Activated CD8-positive, alpha-beta memory T cell treated with anti-CD3 and anti-CD28 coated beads, Interleukin-2, amount 10 ng/mL, durations not matched to agents 7 days and 5 days (primary cell): ENCODE measurements at regions of chr11 and their contacts with region 1.

Region 1: GRCh38 chr11:57800444-57801182 is 39.0 kb downstream of the CTNND1 start:
- DNase-seq: no peak
- ATAC-seq: peak; percentile 93
- H3K4me3 Mint-ChIP-seq: no peak overlapping the region
- H3K27ac Mint-ChIP-seq: peak overlapping the region; percentile 75
- H3K4me1 Mint-ChIP-seq: peaks cover 27% of the 10 kb centered on the region
- H3K27me3 Mint-ChIP-seq: no peaks in the 10 kb centered on the region

Region 2: DNA sequence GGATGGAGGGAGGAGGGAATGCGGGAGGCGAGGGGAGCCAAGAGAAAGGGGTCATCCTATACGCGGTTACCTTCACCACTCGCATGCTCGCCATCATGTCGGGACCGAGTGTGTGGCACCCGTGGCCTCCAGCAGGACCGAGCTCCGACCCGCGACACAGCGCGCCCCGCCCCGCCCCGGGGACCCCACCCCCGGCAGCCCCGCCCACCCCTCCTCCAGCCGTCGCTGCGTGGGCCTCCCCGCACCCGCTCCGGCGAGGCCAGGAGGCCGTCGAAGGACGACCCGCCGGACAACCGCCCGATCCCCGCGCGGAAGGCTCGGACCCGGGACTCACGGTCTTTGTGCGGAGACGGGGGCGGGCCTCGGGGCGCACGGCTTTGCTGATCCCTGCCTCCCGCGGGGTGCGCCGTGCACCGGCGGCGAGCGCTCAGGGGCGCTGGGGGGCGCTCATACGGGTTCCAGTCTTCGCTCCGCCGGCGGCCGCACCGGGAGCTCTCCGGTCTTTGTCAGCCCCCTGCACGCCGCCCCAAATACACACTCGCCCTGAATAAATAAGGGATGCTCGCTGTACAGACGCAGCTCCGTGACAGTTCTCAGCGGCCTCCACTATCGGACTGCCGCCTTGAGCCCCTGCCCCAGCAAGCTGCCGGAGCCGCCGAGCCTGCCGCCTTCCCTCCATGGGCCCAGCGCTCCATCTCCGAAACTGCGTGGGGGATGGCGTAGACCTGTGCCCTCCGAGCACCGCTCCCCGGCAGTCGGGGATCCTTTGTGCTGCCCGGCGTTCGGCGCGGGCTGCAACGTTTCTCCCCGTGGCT is 232.9 kb before region 1 on chr11 and contains the start of gene UBE2L6:
- CTCF ChIA-PET with region 1: interaction called, 39 read pairs
- DNase-seq: peak; percentile 77
- ATAC-seq: peak; percentile 79
- H3K4me3 Mint-ChIP-seq: peak within 1 kb of the TSS; percentile 100
- H3K27ac Mint-ChIP-seq: peak within 1 kb of the TSS; percentile 98
- H3K4me1 Mint-ChIP-seq: peaks cover 30% of the 10 kb centered on the region
- H3K27me3 Mint-ChIP-seq: no peaks in the 10 kb centered on the region
- total RNA-seq, gene UBE2L6: 245 to 317 TPM

Region 3: DNA sequence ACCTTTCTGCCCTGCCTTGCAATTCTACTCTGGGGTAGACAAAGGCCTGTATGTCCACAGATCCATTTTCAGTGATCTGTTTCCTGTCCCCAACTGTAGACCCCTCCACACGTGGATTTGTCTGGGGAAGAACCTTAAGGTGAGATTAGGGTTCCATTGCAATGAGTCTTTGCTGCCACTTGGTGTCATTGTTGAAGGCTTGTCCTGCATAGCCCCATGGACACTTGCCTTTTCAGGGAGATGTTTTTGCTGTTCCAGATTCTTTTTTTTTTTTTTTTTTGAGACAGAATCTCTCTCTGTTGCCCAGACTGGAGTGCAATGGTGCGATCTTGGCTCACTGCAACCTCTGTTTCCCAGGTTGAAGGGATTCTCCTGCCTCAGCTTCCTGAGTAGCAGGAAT is 181.3 kb before region 1 on chr11:
- CTCF ChIA-PET with region 1: no interaction called
- DNase-seq: no peak
- ATAC-seq: no peak
- H3K4me3 Mint-ChIP-seq: no peak overlapping the region
- H3K27ac Mint-ChIP-seq: no peak overlapping the region
- H3K4me1 Mint-ChIP-seq: no peaks in the 10 kb centered on the region
- H3K27me3 Mint-ChIP-seq: peaks cover 15% of the 10 kb centered on the region

Region 4: DNA sequence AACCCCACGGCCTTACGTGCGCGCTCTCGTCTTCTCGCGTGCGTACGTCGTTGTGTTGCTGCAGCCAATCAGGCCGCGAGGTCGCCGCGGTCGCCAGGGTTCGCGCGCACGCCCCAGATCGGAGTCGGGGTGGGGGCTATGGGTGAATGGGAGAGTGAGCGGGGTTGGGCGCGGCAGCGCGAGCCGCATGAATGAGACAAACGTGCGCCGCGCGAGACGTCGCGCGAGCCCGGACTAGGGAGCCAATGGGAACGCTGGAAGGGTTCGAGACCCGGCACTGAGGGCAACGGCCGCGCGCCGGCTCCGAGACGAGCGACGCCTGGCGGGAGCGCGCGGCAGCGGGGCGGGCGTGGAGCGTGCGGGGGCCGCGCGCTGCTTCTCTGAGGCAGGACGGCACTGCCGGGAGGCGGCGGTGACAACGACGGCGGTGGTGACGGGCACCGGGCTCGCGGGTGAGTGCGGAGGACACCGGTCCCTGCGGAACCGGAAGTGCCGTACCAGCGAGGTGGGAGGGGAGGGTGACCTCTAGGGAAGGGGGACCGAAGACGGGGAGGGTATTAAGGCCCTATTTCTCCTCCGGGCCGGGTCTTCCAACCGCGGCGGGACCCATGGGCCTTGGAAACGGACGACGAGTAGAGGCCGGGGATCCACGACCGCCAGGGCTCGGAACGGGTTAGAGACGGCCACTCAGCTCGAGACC is 132.7 kb before region 1 on chr11 and contains the start of gene ZDHHC5:
- CTCF ChIA-PET with region 1: interaction called, 18 read pairs
- DNase-seq: peak; percentile 100
- ATAC-seq: peak; percentile 89
- H3K4me3 Mint-ChIP-seq: peak within 1 kb of the TSS; percentile 95
- H3K27ac Mint-ChIP-seq: peak within 1 kb of the TSS; percentile 97
- H3K4me1 Mint-ChIP-seq: peaks cover 47% of the 10 kb centered on the region
- H3K27me3 Mint-ChIP-seq: no peaks in the 10 kb centered on the region
- total RNA-seq, gene ZDHHC5: 74.5 to 75.9 TPM

Region 5: DNA sequence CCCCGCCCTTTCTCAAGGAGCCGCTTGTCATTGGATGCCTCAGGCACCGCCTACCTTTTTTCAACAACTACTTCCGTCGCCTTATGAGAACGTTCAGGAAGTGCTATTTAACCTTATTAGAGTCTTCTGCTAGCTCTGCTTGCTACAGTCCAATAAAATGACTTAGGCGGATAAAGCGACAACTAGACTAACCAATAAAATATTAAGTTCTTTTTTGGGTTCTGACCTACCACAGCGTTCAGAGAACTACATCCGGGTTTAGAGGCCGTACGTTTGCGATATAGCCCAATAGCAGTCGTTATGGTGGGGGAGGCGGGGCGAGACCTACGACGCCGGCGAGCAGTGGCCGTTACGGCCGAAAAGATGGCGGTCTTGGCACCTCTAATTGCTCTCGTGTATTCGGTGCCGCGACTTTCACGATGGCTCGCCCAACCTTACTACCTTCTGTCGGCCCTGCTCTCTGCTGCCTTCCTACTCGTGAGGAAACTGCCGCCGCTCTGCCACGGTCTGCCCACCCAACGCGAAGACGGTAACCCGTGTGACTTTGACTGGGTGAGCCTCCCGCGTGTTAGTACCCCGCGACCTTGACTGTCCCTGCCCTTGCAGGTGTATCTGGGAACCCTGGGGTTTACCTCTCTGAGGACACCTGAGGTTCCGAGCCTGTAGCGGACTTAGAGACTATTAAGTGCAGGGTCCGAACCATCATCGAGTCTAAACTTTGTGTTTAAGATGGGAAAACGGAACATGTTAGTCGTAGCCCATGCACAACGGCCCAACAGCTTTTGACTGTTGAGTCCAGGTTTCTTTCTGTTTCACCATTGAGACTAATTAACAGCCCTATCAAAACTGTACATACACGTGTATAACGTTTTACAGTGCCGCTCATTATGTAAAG is 88.1 kb before region 1 on chr11 and contains the start of gene TMX2:
- CTCF ChIA-PET with region 1: interaction called, 17 read pairs
- DNase-seq: peak; percentile 95
- ATAC-seq: peak; percentile 92
- H3K4me3 Mint-ChIP-seq: peak within 1 kb of the TSS; percentile 99
- H3K27ac Mint-ChIP-seq: peak within 1 kb of the TSS; percentile 91
- H3K4me1 Mint-ChIP-seq: peaks cover 57% of the 10 kb centered on the region
- H3K27me3 Mint-ChIP-seq: no peaks in the 10 kb centered on the region
- total RNA-seq, gene TMX2: 58.2 to 77.4 TPM

Region 6: GRCh38 chr11:57751676-57752253 is 48.8 kb before region 1 on chr11 and contains the start of gene BTBD18:
- CTCF ChIA-PET with region 1: interaction called, 33 read pairs
- DNase-seq: no peak
- ATAC-seq: no peak
- H3K4me3 Mint-ChIP-seq: no peak within 1 kb of the TSS
- H3K27ac Mint-ChIP-seq: no peak within 1 kb of the TSS
- H3K4me1 Mint-ChIP-seq: peaks cover 9% of the 10 kb centered on the region
- H3K27me3 Mint-ChIP-seq: no peaks in the 10 kb centered on the region
- total RNA-seq, gene BTBD18: not detected

Region 7: GRCh38 chr11:58513747-58514367 is 713.2 kb after region 1 on chr11:
- CTCF ChIA-PET with region 1: interaction called, 10 read pairs
- DNase-seq: no peak
- ATAC-seq: no peak
- H3K4me3 Mint-ChIP-seq: no peak overlapping the region
- H3K27ac Mint-ChIP-seq: no peak overlapping the region
- H3K4me1 Mint-ChIP-seq: no peaks in the 10 kb centered on the region
- H3K27me3 Mint-ChIP-seq: no peaks in the 10 kb centered on the region